ENCODE measurements at regions of chr1 and their contacts with region 1.

Region 1: GRCh38 chr1:115609021-115609420 is 32.7 kb upstream of the VANGL1 start:
- DNase-seq: peak; percentile 28
- H3K4me3 Mint-ChIP-seq: no peak overlapping the region
- H3K27ac Mint-ChIP-seq: no peak overlapping the region
- H3K4me1 Mint-ChIP-seq: no peaks in the 10 kb centered on the region
- H3K27me3 Mint-ChIP-seq: peaks cover 4% of the 10 kb centered on the region

Region 2: DNA sequence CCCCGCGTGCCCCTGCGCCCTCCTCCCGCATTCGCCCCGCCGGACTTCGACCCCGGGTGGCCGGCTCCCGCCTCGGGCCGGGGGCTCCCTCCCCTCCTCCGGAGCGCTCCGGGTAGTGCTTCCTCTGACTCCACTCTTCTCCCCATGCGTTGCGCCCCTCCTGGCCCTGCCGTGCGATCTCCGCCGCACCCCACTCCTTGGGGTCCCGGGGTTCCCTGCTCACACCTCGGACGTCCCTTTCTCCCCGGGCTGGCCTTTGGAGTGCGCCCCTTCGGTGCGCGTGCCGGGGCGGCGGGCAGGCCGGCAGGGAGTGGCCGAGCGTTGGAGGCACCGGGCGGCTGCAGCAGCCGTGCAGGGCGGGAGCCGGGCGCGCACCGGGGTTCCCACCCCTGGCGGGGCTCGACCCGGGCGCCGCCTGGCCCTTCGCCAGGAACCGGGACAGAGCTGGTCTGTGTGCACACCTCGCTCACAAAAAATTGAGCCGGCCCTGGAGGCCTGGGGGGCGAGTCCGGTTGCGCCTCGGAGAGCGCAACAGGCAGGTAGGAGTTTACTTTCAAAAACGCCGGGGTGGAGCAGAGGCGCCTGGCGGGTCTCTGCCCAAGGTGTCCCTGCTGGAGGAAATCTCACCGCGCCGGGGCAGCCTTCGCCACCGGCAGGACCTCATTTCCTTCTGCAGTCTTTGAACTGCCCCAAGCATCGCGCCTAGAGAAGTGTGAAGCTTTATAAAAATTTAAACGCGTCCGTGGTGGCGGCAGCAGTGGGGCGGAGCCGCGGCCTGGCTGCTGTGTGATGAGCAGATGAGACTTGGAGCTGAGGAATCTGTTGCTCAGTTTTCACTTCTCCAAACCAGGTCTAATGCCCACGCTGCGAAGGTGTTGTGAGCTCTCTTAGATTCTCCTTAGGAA is 33.4 kb after region 1 on chr1:
- intact Hi-C with region 1: loop called (anchors 5 kb)
- DNase-seq: peak; percentile 82
- H3K4me3 Mint-ChIP-seq: peak overlapping the region; percentile 87
- H3K27ac Mint-ChIP-seq: peak overlapping the region; percentile 57
- H3K4me1 Mint-ChIP-seq: peaks cover 19% of the 10 kb centered on the region
- H3K27me3 Mint-ChIP-seq: peaks cover 27% of the 10 kb centered on the region

Region 3: GRCh38 chr1:115706587-115707425 is 97.8 kb after region 1 on chr1:
- intact Hi-C with region 1: loop called (anchors 1 kb)
- DNase-seq: peak; percentile 68
- H3K4me3 Mint-ChIP-seq: no peak overlapping the region
- H3K27ac Mint-ChIP-seq: peak overlapping the region; percentile 45
- H3K4me1 Mint-ChIP-seq: no peaks in the 10 kb centered on the region
- H3K27me3 Mint-ChIP-seq: peaks cover 15% of the 10 kb centered on the region

Region 4: GRCh38 chr1:115771847-115772457 is 162.9 kb after region 1 on chr1:
- intact Hi-C with region 1: loop called (anchors 1 kb)
- DNase-seq: peak; percentile 77
- H3K4me3 Mint-ChIP-seq: no peak overlapping the region
- H3K27ac Mint-ChIP-seq: no peak overlapping the region
- H3K4me1 Mint-ChIP-seq: no peaks in the 10 kb centered on the region
- H3K27me3 Mint-ChIP-seq: peaks cover 7% of the 10 kb centered on the region

Measured in activated CD4-positive, alpha-beta T cell treated with anti-CD3 and anti-CD28 coated beads, Interleukin-2, amount 10 ng/mL, durations not matched to agents 24 days and 14 days (primary cell).